ENCODE measurements at regions of chr12 and their contacts with region 1.

Region 1: DNA sequence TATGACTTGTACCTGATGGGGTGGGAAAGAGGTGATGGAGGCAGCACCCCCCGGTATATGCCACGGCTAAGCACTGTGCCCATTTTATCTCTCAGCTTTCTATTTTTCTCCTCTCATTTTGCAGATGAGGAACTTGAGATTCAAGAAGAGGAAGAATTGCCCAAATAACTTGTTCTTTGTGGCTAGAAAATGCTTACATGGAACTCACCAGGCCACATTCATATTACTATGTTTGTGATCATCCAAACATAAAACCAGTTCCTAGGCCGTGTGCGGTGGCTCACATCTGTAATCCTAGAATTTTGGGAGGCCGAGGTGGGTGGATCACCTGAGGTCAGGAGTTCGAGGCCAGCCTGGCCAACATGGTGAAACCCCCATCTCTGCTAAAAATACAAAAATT is 14.5 kb upstream of the PSMD9 start:
- DNase-seq: no peak
- H3K4me3 Mint-ChIP-seq: no peak overlapping the region
- H3K27ac Mint-ChIP-seq: peak overlapping the region; percentile 2
- H3K4me1 Mint-ChIP-seq: no peaks in the 10 kb centered on the region
- H3K27me3 Mint-ChIP-seq: no peaks in the 10 kb centered on the region

Region 2: GRCh38 chr12:121697098-121697698 is 176.9 kb before region 1 on chr12:
- CTCF ChIA-PET with region 1: no interaction called
- POLR2A ChIA-PET with region 1: interaction called, 10 read pairs
- DNase-seq: peak; percentile 68
- H3K4me3 Mint-ChIP-seq: no peak overlapping the region
- H3K27ac Mint-ChIP-seq: no peak overlapping the region
- H3K4me1 Mint-ChIP-seq: peaks cover 4% of the 10 kb centered on the region
- H3K27me3 Mint-ChIP-seq: no peaks in the 10 kb centered on the region

Measured in activated CD4-positive, alpha-beta T cell treated with anti-CD3 and anti-CD28 coated beads, Interleukin-2, amount 10 ng/mL, durations not matched to agents 7 days and 5 days (primary cell).